ENCODE measurements at regions of chr18 and their contacts with region 1.

Region 1: GRCh38 chr18:76492669-76493212 is 2.3 kb downstream of the ZNF516 start:
- DNase-seq: peak; percentile 100
- H3K4me3 ChIP-seq: peak overlapping the region; percentile 60 to 83
- H3K27ac ChIP-seq: peak overlapping the region; percentile 94 to 97
- H3K4me1 ChIP-seq: peaks cover 0 to 3% of the 10 kb centered on the region in 2 donors
- H3K27me3 ChIP-seq: no peaks in the 10 kb centered on the region
- CTCF ChIP-seq: no peak
- POLR2A ChIP-seq: peak; percentile 55 to 68

Region 2: GRCh38 chr18:75945268-75945933 is 547.3 kb before region 1 on chr18:
- intact Hi-C with region 1: no loop called
- DNase-seq: no peak
- H3K4me3 ChIP-seq: no peak overlapping the region
- H3K27ac ChIP-seq: no peak overlapping the region
- H3K4me1 ChIP-seq: no peaks in the 10 kb centered on the region
- H3K27me3 ChIP-seq: no peaks in the 10 kb centered on the region
- CTCF ChIP-seq: no peak
- POLR2A ChIP-seq: no peak

Region 3: DNA sequence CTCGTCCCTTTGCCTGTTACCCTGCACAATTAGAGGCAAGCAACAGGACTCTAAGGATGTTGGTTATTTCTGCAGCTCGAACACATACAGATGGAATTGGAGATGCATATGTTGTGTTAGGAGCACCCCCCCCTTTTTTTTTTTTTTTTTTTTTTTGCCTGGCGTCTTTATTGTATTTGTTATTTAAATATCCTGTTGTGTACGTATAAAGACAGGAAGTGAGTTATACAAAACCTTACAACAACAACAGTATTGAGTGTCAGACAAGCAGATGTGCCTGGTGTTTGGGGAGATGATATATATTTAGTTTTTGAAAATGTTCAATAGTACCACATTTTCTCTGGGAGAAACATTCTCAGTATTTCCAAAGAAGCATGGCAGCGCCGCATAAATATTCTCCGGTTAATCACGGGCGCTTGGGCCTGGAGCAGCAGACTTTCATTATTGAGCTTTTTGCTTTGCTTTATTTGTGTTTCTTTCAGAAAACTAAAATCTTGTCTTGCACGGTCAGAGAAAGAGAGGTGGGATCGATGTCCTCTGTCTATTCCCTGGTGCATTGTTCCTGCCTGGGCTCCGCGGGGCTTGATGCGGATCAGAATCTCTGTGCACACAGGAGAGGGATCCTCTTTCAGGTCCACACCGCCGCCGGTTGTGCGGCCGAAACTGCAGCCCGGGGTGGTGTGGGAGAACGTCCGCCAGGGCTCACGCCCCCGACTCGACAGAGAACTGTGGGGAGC is 25.6 kb after region 1 on chr18:
- intact Hi-C with region 1: no loop called
- DNase-seq: peak; percentile 71 to 72
- H3K4me3 ChIP-seq: peak overlapping the region; percentile 26 to 31
- H3K27ac ChIP-seq: peak overlapping the region; percentile 86 to 97
- H3K4me1 ChIP-seq: peaks cover 0 to 3% of the 10 kb centered on the region in 2 donors
- H3K27me3 ChIP-seq: no peaks in the 10 kb centered on the region
- CTCF ChIP-seq: peak in 1 of 4 experiments; percentile 17
- POLR2A ChIP-seq: no peak

Region 4: GRCh38 chr18:76686737-76687262 is 194.1 kb after region 1 on chr18:
- intact Hi-C with region 1: loop called (anchors 5 kb)
- DNase-seq: peak; percentile 91 to 94
- H3K4me3 ChIP-seq: no peak overlapping the region
- H3K27ac ChIP-seq: peak overlapping the region; percentile 87 to 95
- H3K4me1 ChIP-seq: peaks cover 8 to 18% of the 10 kb centered on the region in 2 donors
- H3K27me3 ChIP-seq: no peaks in the 10 kb centered on the region
- CTCF ChIP-seq: peak; percentile 68 to 90 (median 72)
- POLR2A ChIP-seq: no peak